ENCODE measurements at regions of chr17 and their contacts with region 1.

Region 1: GRCh38 chr17:13580790-13581189 is 20.9 kb downstream of the HS3ST3A1 start:
- DNase-seq: no peak
- ATAC-seq: no peak
- H3K4me3 ChIP-seq: no peak overlapping the region
- H3K27ac ChIP-seq: no peak overlapping the region
- H3K4me1 ChIP-seq: peaks cover 23% of the 10 kb centered on the region
- H3K27me3 ChIP-seq: no peaks in the 10 kb centered on the region
- CTCF ChIP-seq: no peak

Region 2: DNA sequence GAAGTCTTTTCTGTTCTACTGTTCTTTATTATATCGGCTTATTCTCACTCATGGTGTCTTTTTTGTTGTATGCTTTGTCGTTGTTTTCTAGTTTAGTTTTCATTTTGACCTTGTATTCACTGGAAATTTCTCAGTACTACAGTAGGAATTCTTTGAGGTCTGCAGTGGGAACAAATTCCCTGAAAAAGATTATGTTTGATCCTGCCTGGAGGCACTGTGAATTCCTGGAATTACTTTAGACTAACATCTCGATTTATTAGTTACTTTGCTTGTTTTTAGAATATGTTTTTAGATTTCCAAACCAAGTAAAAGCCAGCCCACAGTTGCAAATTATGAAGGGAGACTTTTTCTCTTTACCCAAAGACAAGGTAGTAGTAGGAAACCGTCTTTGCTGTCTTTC is 375.5 kb before region 1 on chr17:
- CTCF ChIA-PET with region 1: no interaction called
- POLR2A ChIA-PET with region 1: interaction called, 10 read pairs
- intact Hi-C with region 1: no loop called
- DNase-seq: no peak
- ATAC-seq: no peak
- H3K4me3 ChIP-seq: no peak overlapping the region
- H3K27ac ChIP-seq: peak overlapping the region; percentile 43
- H3K4me1 ChIP-seq: no peaks in the 10 kb centered on the region
- H3K27me3 ChIP-seq: peaks cover 18% of the 10 kb centered on the region; the same call in 1 of the 2 replicates
- CTCF ChIP-seq: no peak

Region 3: DNA sequence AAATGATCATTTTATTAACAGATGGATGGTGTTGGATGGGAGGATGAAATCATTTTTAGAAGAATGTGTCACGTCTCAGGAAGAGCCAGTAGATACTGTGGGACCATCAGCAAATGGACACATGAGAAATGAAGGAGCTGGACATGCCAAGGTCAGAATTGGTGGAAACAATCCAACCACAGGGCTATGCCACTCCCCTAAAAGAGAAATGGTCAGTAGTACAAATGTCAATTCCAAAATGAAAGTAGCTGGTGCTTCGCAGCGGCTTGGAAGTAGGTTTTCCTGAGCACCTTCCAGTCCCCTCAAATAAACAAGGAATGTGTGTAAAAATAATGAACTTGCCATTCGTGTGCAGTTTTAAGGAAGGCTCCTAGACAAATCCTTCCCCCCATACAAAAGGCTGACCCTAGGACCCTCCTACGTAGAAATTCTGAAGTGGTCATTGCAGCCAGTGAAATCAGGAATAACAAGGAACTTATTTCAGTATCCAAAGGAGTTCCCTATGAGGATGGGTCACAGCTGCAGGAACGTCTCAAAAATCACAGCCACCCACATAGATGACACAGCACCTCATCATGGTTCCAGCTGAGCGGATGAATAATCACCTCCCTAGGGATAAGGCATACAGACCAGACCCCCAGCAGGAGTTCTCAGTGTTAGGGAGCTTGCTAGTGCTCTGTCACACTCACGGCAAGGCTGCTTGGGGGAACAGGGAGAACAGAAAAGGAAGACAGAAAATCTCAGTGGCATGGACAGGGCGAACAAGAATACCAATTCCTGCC is 218.3 kb before region 1 on chr17:
- CTCF ChIA-PET with region 1: no interaction called
- POLR2A ChIA-PET with region 1: no interaction called
- intact Hi-C with region 1: no loop called
- DNase-seq: peak; percentile 30
- ATAC-seq: no peak
- H3K4me3 ChIP-seq: peak overlapping the region; percentile 54
- H3K27ac ChIP-seq: no peak overlapping the region
- H3K4me1 ChIP-seq: no peaks in the 10 kb centered on the region
- H3K27me3 ChIP-seq: no peaks in the 10 kb centered on the region
- CTCF ChIP-seq: no peak

Region 4: GRCh38 chr17:13562271-13562800 is 18.5 kb before region 1 on chr17:
- CTCF ChIA-PET with region 1: no interaction called
- POLR2A ChIA-PET with region 1: no interaction called
- intact Hi-C with region 1: no loop called
- DNase-seq: peak; percentile 90
- ATAC-seq: peak; percentile 59
- H3K4me3 ChIP-seq: peak overlapping the region; percentile 62
- H3K27ac ChIP-seq: peak overlapping the region; percentile 71
- H3K4me1 ChIP-seq: peaks cover 32% of the 10 kb centered on the region
- H3K27me3 ChIP-seq: no peaks in the 10 kb centered on the region
- CTCF ChIP-seq: no peak